ENCODE measurements at regions of chr17 and their contacts with region 1.

Region 1: DNA sequence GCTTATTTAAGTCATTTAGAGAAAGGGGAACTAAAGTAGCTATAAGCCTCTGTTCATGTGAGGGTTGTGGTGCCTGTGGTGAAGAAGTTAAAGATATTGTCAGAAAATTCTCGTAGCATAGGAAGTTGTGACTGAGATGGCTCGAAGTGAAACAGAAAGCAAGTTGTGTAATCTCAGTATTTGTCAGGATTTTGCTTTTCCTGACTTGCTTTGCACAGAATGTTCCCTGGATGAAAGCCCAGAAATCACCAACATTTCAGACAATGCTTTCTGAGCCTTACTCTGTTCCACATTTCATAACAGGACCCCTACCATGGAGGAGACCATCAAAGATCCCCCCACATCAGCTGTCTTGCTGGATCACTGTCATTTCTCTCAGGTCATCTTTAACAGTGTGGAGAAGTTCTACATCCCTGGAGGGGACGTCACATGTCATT is 10.6 kb downstream of the CALCOCO2 start:
- DNase-seq: peak; percentile 70 to 85 (median 84)
- H3K4me3 ChIP-seq: peak overlapping the region; percentile 26 to 76 (median 57)
- H3K4me3 Mint-ChIP-seq: peak overlapping the region; percentile 70 to 91
- H3K27ac ChIP-seq: peak overlapping the region; percentile 17 to 93
- H3K27ac Mint-ChIP-seq: peak overlapping the region; percentile 93 to 98 (median 97)
- H3K4me1 ChIP-seq: peaks cover 53 to 61% of the 10 kb centered on the region in 2 donors
- H3K4me1 Mint-ChIP-seq: peaks cover 57% of the 10 kb centered on the region
- H3K27me3 ChIP-seq: no peaks in the 10 kb centered on the region
- H3K27me3 Mint-ChIP-seq: peaks cover 9 to 26% (median 25%) of the 10 kb centered on the region in 3 donors
- CTCF ChIP-seq: no peak

Region 2: DNA sequence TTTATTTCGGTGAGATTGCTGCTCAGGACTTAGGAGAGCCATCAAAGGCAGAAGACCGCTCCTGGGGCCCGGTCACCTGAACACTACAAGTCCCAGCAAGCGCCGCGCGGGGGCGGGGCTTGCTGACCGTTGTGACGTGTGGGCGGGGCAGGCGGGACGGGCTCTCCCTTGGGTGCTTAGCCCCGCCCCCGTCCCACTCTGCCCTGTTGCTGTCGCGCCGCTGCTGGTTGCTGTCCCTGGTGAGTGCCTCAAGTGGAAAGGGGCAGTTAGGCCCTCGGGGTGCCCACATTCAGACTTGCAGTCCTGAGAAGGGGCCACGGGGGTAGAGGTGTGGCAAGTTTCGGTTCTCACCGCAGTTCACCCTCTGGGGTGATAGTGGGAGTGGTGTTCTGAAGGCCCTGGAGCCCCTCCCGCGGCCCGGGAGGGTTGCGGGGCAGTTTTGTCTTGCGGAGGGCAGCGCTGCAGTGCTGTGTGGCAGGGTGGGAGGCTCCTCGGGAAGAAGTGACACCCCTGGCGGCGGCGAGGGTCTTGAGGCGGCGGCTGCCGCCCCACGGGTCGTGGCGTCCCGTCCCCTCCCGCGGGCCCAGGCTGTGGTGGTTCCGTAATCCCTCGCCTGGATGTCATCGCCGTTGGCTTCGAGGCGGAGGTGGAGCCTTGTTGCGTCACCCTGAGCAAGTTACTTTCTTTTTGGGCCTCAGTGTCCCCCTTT is 10.4 kb before region 1 on chr17 and contains the start of gene CALCOCO2:
- intact Hi-C with region 1: loop called in 1 of 2 experiments (anchors 1 kb)
- DNase-seq: peak; percentile 94 to 95 (median 95)
- H3K4me3 ChIP-seq: peak within 1 kb of the TSS; percentile 72 to 92 (median 92)
- H3K4me3 Mint-ChIP-seq: peak within 1 kb of the TSS; percentile 94 to 98
- H3K27ac ChIP-seq: peak within 1 kb of the TSS; percentile 96 to 98
- H3K27ac Mint-ChIP-seq: peak within 1 kb of the TSS; percentile 99 to 100 (median 100)
- H3K4me1 ChIP-seq: peaks cover 15 to 18% of the 10 kb centered on the region in 2 donors
- H3K4me1 Mint-ChIP-seq: peaks cover 28% of the 10 kb centered on the region
- H3K27me3 ChIP-seq: peaks cover 3 to 4% of the 10 kb centered on the region in 2 donors
- H3K27me3 Mint-ChIP-seq: peaks cover 8 to 33% (median 18%) of the 10 kb centered on the region in 3 donors
- CTCF ChIP-seq: no peak
- polyA plus RNA-seq, gene CALCOCO2: 87.5 to 280 (median 214) TPM

Region 3: GRCh38 chr17:48915459-48916282 is 74.3 kb after region 1 on chr17:
- intact Hi-C with region 1: loop called in 1 of 2 experiments (anchors 5 kb)
- DNase-seq: peak; percentile 88 to 96 (median 94)
- H3K4me3 ChIP-seq: peak overlapping the region in 1 of 3 experiments; percentile 16
- H3K4me3 Mint-ChIP-seq: peak overlapping the region; percentile 38 to 59
- H3K27ac ChIP-seq: peak overlapping the region; percentile 79 to 93
- H3K27ac Mint-ChIP-seq: peak overlapping the region; percentile 94 to 99 (median 97)
- H3K4me1 ChIP-seq: peaks cover 22 to 31% of the 10 kb centered on the region in 2 donors
- H3K4me1 Mint-ChIP-seq: peaks cover 36% of the 10 kb centered on the region
- H3K27me3 ChIP-seq: no peaks in the 10 kb centered on the region
- H3K27me3 Mint-ChIP-seq: no peaks in the 10 kb centered on the region
- CTCF ChIP-seq: no peak

Measured in CD14-positive monocyte (primary cell).